ENCODE measurements at regions of chr1 and their contacts with region 1.

Region 1: DNA sequence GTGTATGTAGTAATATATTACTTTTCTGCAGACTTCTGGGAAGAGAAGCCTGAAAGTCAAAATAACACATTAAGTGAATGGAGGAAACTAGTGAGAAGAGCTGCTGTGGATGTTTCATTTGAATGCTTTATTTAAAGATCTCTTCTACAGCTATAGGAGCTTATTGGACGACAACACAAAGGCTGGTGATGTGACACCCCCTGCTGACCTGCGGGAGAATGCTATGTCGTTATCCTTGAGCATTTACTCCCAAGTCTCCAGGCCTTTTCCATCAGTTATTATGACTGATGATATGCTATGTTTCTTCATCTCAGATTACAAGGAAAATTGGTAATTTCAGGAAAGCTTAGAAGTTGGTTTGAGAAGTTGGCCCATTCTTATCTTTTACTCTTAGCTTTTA is 22.3 kb upstream of the PLA2G4A start:
- DNase-seq: peak; percentile 48 to 52
- H3K4me3 ChIP-seq: no peak overlapping the region
- H3K4me3 Mint-ChIP-seq: no peak overlapping the region
- H3K27ac Mint-ChIP-seq: no peak overlapping the region
- H3K4me1 ChIP-seq: no peaks in the 10 kb centered on the region
- H3K4me1 Mint-ChIP-seq: no peaks in the 10 kb centered on the region
- H3K27me3 ChIP-seq: no peaks in the 10 kb centered on the region
- H3K27me3 Mint-ChIP-seq: no peaks in the 10 kb centered on the region
- CTCF ChIP-seq: peak; percentile 61 to 64

Region 2: GRCh38 chr1:186375088-186375953 is 431.2 kb before region 1 on chr1 and contains the starts of genes ODR4 and TPR:
- CTCF ChIA-PET with region 1: interaction called, 7 read pairs
- POLR2A ChIA-PET with region 1: no interaction called
- intact Hi-C with region 1: loop called (anchors 1 kb)
- DNase-seq: peak; percentile 97 to 99
- H3K4me3 ChIP-seq: peak within 1 kb of the TSS; percentile 78
- H3K4me3 Mint-ChIP-seq: peak within 1 kb of the TSS; percentile 98
- H3K27ac Mint-ChIP-seq: peak within 1 kb of the TSS; percentile 100
- H3K4me1 ChIP-seq: no peaks in the 10 kb centered on the region
- H3K4me1 Mint-ChIP-seq: no peaks in the 10 kb centered on the region
- H3K27me3 ChIP-seq: no peaks in the 10 kb centered on the region
- H3K27me3 Mint-ChIP-seq: no peaks in the 10 kb centered on the region
- CTCF ChIP-seq: peak; percentile 86 to 90
- total RNA-seq, gene ODR4: 29.1 and 32.0 TPM in 2 replicates
- total RNA-seq, gene TPR: 172 and 178 TPM in 2 replicates

Region 3: DNA sequence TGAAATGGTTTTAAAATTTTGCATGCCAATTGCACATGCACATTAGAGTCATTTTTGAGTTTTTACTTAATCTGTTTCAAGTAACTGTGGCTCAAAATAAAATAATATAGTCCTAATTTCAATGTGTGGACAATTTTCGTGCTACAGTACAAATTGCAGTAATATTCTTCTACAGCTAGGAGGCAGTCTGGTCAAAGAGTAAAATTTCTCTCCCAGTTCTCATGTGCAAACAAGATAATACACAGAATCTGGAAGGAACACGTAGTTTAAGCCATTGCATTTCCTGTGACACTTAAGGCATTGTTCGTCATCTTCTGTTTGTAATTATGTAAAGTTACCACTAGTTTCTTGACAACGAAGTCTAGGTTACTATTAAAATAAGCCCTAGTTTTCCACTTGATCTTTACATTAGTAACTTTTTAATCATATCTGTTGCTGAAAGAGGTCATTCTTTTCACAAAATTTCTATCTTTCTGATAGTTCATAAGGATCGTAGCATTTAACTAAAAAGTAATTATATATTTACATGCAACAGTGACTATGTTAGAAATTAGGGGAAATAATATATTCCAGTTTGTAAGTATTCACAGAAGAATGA is 401.9 kb before region 1 on chr1:
- CTCF ChIA-PET with region 1: no interaction called
- POLR2A ChIA-PET with region 1: no interaction called
- intact Hi-C with region 1: loop called (anchors 1 kb)
- DNase-seq: peak in 1 of 2 experiments; percentile 43
- H3K4me3 ChIP-seq: no peak overlapping the region
- H3K4me3 Mint-ChIP-seq: no peak overlapping the region
- H3K27ac Mint-ChIP-seq: no peak overlapping the region
- H3K4me1 ChIP-seq: no peaks in the 10 kb centered on the region
- H3K4me1 Mint-ChIP-seq: peaks cover 6% of the 10 kb centered on the region
- H3K27me3 ChIP-seq: no peaks in the 10 kb centered on the region
- H3K27me3 Mint-ChIP-seq: no peaks in the 10 kb centered on the region
- CTCF ChIP-seq: peak; percentile 58 to 63

Region 4: GRCh38 chr1:186482661-186483255 is 323.7 kb before region 1 on chr1:
- CTCF ChIA-PET with region 1: interaction called, 4 read pairs
- POLR2A ChIA-PET with region 1: no interaction called
- intact Hi-C with region 1: loop called (anchors 1 kb)
- DNase-seq: peak; percentile 67 to 75
- H3K4me3 ChIP-seq: no peak overlapping the region
- H3K4me3 Mint-ChIP-seq: no peak overlapping the region
- H3K27ac Mint-ChIP-seq: no peak overlapping the region
- H3K4me1 ChIP-seq: peaks cover 53% of the 10 kb centered on the region
- H3K4me1 Mint-ChIP-seq: peaks cover 37% of the 10 kb centered on the region
- H3K27me3 ChIP-seq: no peaks in the 10 kb centered on the region
- H3K27me3 Mint-ChIP-seq: no peaks in the 10 kb centered on the region
- CTCF ChIP-seq: peak; percentile 88 to 94

Region 5: DNA sequence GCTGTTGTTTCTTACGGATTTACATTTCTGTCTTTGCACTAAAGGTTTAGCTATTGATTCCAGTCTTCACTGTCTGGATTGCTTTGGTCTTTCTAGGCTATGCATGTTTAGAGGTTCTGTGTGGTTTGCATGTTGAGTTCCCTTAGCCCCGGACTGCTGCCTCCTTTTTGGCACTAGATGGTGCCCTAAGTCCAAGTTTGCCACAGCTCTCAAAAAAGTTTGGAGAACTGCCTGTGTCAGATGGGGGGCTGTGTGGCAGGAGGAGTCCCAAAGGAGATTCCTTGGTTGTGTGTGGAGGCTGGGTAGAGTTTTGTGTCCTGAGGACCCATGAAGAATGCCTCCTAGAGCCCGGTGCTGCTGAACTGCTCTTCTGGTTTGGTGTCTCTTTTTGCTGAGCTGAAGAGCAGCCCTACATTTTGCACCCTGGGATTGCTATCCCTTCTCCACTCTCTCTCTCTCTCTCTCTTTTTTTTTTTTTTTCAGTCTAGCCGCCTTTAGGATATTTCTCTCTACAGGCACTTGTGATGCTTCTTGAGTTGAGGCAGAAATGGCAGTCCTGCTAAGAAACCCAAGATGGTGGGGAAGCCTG is 200.6 kb before region 1 on chr1:
- CTCF ChIA-PET with region 1: interaction called, 9 read pairs
- POLR2A ChIA-PET with region 1: no interaction called
- intact Hi-C with region 1: loop called (anchors 1 kb)
- DNase-seq: peak; percentile 70 to 72
- H3K4me3 ChIP-seq: no peak overlapping the region
- H3K4me3 Mint-ChIP-seq: no peak overlapping the region
- H3K27ac Mint-ChIP-seq: peak overlapping the region; percentile 43
- H3K4me1 ChIP-seq: peaks cover 16% of the 10 kb centered on the region
- H3K4me1 Mint-ChIP-seq: peaks cover 9% of the 10 kb centered on the region
- H3K27me3 ChIP-seq: no peaks in the 10 kb centered on the region
- H3K27me3 Mint-ChIP-seq: no peaks in the 10 kb centered on the region
- CTCF ChIP-seq: peak; percentile 70 to 71

Region 6: DNA sequence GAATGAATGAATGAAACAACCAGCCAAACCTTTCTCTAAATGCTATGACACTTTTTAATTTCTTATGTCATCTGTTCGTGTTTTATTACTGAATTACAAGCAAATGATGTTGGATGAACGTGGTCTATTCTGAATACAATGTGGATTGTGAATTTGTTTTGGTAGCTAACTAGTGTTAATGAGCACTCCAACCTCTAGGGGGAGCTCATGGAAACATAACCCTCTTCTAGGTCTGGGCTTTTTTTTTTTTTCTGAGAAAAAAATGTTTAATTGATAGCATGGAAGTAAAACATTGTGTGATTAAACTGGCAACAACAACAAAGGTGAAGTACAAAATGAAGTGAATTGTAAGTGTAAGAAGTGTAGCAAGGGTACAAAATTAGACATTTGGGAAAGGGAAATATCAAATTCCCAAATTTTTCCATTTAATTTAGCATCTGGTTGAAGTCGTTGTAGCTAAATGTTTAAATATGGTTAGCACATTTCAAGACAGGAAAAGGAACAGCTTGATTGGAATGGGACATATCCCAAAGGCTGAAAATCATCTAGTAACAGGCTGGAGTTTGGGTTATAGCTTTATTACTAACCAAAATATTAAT is 83.7 kb before region 1 on chr1:
- CTCF ChIA-PET with region 1: interaction called, 22 read pairs
- POLR2A ChIA-PET with region 1: no interaction called
- intact Hi-C with region 1: loop called (anchors 1 kb)
- DNase-seq: peak; percentile 41 to 62
- H3K4me3 ChIP-seq: no peak overlapping the region
- H3K4me3 Mint-ChIP-seq: no peak overlapping the region
- H3K27ac Mint-ChIP-seq: no peak overlapping the region
- H3K4me1 ChIP-seq: no peaks in the 10 kb centered on the region
- H3K4me1 Mint-ChIP-seq: no peaks in the 10 kb centered on the region
- H3K27me3 ChIP-seq: no peaks in the 10 kb centered on the region
- H3K27me3 Mint-ChIP-seq: no peaks in the 10 kb centered on the region
- CTCF ChIP-seq: peak; percentile 50 to 72

Region 7: GRCh38 chr1:186775881-186776560 is 30.5 kb before region 1 on chr1:
- CTCF ChIA-PET with region 1: no interaction called
- POLR2A ChIA-PET with region 1: no interaction called
- intact Hi-C with region 1: no loop called
- DNase-seq: no peak
- H3K4me3 ChIP-seq: no peak overlapping the region
- H3K4me3 Mint-ChIP-seq: no peak overlapping the region
- H3K27ac Mint-ChIP-seq: no peak overlapping the region
- H3K4me1 ChIP-seq: no peaks in the 10 kb centered on the region
- H3K4me1 Mint-ChIP-seq: no peaks in the 10 kb centered on the region
- H3K27me3 ChIP-seq: no peaks in the 10 kb centered on the region
- H3K27me3 Mint-ChIP-seq: peaks cover 4% of the 10 kb centered on the region
- CTCF ChIP-seq: no peak

Measured in Caco-2 (cell line).